PC-3 (cell line): ENCODE measurements at regions of chr10 and their contacts with region 1.

Region 1: GRCh38 chr10:75395066-75395931 is 6.3 kb downstream of the ZNF503 start:
- DNase-seq: peak; percentile 93
- ATAC-seq: peak; percentile 14
- H3K4me3 ChIP-seq: peak overlapping the region; percentile 79
- H3K27ac ChIP-seq: peak overlapping the region; percentile 45
- H3K4me1 ChIP-seq: peaks cover 6% of the 10 kb centered on the region; the same call in 1 of the 2 replicates
- H3K27me3 ChIP-seq: peaks cover 61% of the 10 kb centered on the region
- CTCF ChIP-seq: peak; percentile 100

Region 2: DNA sequence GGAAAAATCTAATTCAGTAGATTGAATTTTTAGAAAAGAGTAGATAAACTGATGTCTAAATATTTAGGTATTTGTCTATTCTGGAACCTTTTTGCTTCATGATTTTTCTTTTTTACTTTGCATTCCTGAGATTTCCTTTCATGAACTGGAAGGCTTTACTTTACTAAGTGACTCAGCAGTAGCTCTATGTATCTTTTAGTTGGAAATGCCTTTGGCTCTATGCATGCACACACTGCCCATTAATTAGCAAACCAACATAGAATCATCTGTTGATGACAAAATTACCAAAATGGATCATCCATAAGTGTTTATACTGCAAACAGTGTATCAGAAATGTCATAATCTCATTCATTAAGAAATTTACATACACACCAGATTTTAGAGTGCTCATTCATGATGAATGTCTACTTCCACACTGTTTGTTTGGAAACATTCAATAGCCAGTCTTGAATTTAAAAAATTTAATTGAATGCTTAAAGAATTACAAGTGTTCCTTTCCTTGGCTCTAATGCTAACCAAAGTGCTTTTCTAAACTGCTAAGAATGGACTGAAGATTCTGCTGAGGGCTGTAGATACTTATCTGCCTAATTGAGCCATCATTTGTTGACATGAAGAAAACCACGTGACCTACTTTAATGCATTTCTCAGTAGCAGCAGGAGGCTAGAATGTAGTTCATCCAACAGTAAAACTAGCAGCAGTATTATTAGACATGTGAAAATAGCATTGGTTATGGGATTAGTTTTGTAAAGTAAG is 962.3 kb before region 1 on chr10:
- CTCF ChIA-PET with region 1: no interaction called
- POLR2A ChIA-PET with region 1: no interaction called
- intact Hi-C with region 1: no loop called
- DNase-seq: peak; percentile 70
- ATAC-seq: peak; percentile 82
- H3K4me3 ChIP-seq: no peak overlapping the region
- H3K27ac ChIP-seq: peak overlapping the region; percentile 46
- H3K4me1 ChIP-seq: peaks cover 29% of the 10 kb centered on the region
- H3K27me3 ChIP-seq: no peaks in the 10 kb centered on the region
- CTCF ChIP-seq: no peak

Region 3: GRCh38 chr10:74932648-74933047 is 462.7 kb before region 1 on chr10:
- CTCF ChIA-PET with region 1: no interaction called
- POLR2A ChIA-PET with region 1: no interaction called
- intact Hi-C with region 1: no loop called
- DNase-seq: peak; percentile 47
- ATAC-seq: no peak
- H3K4me3 ChIP-seq: no peak overlapping the region
- H3K27ac ChIP-seq: no peak overlapping the region
- H3K4me1 ChIP-seq: peaks cover 22% of the 10 kb centered on the region
- H3K27me3 ChIP-seq: no peaks in the 10 kb centered on the region
- CTCF ChIP-seq: no peak

Region 4: GRCh38 chr10:75261813-75262708 is 133.2 kb before region 1 on chr10:
- CTCF ChIA-PET with region 1: interaction called, 4 read pairs
- POLR2A ChIA-PET with region 1: no interaction called
- intact Hi-C with region 1: loop called (anchors 1 kb)
- DNase-seq: peak; percentile 87
- ATAC-seq: peak; percentile 77
- H3K4me3 ChIP-seq: peak overlapping the region; percentile 37; the same call in 1 of the 2 replicates
- H3K27ac ChIP-seq: peak overlapping the region; percentile 66
- H3K4me1 ChIP-seq: peaks cover 28% of the 10 kb centered on the region
- H3K27me3 ChIP-seq: no peaks in the 10 kb centered on the region
- CTCF ChIP-seq: no peak

Region 5: DNA sequence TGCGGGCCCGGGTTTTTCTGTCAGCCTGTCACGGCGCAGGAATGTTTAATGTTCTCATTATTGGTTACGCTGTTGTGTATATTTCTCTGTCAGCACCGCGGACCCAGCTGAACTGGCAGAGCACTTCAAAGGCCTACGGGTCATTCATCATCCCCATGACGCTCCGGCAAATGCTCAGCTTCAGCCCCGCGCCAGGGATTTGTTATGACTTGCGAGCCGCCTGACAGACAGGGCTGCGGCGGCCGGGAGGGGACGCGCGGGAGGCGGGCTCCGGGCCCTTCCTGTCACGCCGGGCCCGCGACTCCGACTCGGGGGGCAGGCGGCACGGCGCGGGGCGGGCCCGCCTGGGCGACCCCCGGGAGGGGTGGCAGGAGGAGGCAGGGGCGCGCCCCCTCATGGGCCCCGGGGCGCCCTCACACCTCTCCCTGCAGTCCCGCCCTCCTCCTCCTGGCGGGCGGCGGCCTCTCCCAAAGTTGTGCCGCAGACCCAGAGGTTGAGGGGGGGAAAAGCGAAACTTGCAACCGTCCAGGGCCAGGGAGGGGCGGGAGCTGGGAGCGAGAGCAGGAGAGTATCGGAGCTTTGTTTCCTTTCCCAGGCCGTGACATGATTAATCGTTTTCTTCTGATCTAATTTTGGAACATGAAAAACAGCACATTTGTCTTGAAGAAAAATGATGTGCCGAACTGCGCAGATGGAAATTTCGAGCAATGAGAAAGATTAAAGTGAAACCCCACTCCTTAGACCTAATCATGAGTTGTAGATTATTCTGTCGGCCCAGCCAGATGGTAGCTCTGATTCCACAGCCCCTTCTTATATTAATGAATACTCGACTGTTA is 100.2 kb before region 1 on chr10:
- CTCF ChIA-PET with region 1: interaction called, 4 read pairs
- POLR2A ChIA-PET with region 1: no interaction called
- intact Hi-C with region 1: loop called (anchors 1 kb)
- DNase-seq: peak; percentile 99
- ATAC-seq: peak; percentile 90
- H3K4me3 ChIP-seq: peak overlapping the region; percentile 66
- H3K27ac ChIP-seq: peak overlapping the region; percentile 6
- H3K4me1 ChIP-seq: peaks cover 19% of the 10 kb centered on the region
- H3K27me3 ChIP-seq: no peaks in the 10 kb centered on the region; the same call in 1 of the 2 replicates
- CTCF ChIP-seq: peak; percentile 65

Region 6: DNA sequence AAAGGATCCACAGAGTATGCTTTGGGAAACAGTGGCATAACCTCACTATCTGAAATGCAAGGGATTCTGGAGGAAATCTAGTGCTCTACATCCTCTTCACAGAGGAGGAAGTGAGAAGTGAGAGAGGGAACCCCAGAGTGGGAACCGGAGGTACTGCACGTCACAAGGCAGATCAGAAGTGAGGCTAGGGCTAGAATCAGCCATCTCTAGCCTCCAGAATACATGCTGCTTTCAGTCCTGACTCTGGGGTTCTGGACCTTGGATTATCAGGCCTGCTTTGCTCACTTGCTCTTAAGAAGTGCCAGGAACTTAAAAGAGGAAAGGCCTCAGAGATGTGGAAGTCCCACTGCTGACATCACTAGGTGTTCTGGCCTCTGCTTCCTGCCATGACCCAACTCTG is 19.5 kb before region 1 on chr10:
- CTCF ChIA-PET with region 1: no interaction called
- POLR2A ChIA-PET with region 1: no interaction called
- intact Hi-C with region 1: no loop called
- DNase-seq: no peak
- ATAC-seq: no peak
- H3K4me3 ChIP-seq: no peak overlapping the region
- H3K27ac ChIP-seq: no peak overlapping the region
- H3K4me1 ChIP-seq: no peaks in the 10 kb centered on the region
- H3K27me3 ChIP-seq: peaks cover 31% of the 10 kb centered on the region
- CTCF ChIP-seq: no peak